CD4-positive, alpha-beta T cell (primary cell): ENCODE measurements at regions of chr16 and their contacts with region 1.

Region 1: DNA sequence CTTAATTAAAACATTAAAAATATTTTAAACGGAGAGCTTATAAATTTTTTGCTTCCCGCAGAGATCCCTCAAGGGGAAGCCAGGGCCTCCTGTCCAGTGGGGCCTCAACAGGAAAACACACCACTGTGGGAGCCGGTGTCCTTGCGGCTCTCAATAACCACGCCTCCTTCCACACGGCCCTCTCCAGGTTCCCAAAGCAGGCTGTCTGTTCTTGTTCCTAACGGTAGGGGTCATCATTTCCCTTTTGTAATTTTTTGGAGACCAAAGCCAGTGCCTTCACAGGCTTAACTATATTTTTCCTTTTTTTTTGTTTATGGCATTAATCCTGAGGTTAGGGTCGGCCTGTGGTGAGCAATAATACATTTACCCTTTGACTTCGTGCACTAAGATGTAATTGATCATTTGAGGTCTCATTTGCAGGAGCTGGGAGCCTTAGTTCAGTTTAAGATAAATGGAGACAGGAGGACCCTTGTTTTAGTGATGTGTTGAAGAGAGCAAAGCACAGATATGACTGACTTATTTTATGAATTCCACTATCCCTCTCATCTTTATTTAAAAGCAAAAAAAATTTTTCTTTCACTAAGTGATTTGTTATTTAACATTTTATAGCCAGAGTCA is 77.5 kb upstream of the N4BP1 start:
- DNase-seq: peak in 6 of 14 experiments; percentile 1 to 40 (median 12)
- ATAC-seq: no peak
- H3K4me3 ChIP-seq: no peak overlapping the region
- H3K4me3 Mint-ChIP-seq: no peak overlapping the region
- H3K27ac ChIP-seq: no peak overlapping the region
- H3K27ac Mint-ChIP-seq: no peak overlapping the region
- H3K4me1 ChIP-seq: peaks cover 3% of the 10 kb centered on the region
- H3K4me1 Mint-ChIP-seq: no peaks in the 10 kb centered on the region
- H3K27me3 ChIP-seq: peaks cover 0 to 8% of the 10 kb centered on the region in 2 experiments
- H3K27me3 Mint-ChIP-seq: peaks cover 25% of the 10 kb centered on the region
- CTCF ChIP-seq: peak; percentile 30

Region 2: DNA sequence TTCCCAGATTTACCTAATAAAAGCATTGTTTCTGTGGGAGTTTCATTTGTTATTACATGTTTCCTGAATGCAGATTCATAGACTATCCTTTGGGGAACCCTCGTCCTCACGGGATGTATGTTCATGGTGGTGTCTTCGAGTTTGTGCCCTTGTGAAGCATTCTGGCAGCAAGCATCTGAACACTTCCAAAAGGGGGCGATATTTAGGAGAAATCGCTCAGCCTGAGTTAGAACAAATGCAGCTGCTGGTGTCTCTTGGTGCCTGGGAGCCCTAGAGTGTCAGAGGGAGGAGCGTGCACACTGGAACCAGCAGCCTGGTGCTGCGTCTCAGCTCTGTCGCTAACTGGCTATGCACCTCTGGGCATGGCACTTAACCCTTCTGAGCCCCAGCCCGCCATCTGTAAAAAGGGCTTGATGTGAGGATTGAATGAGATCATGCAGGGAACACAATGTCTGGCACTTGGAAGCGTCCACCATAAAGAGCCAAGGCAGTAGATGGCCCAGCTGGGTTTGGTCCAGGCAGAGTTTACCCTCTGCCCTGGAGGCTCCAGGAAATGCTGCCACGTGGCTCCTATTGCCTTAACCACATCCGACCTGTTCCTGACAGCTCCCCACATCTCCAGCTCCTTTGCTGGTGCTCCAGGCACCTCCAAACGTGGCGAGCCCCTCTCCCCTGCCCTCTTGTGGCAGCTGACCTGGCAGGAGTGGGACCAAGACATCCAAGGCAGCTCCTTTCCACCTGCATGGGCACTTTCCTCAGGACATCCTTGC is 661.1 kb after region 1 on chr16:
- CTCF ChIA-PET with region 1: no interaction called
- POLR2A ChIA-PET with region 1: no interaction called
- intact Hi-C with region 1: loop called in 1 of 2 experiments (anchors 5 kb)
- DNase-seq: no peak
- ATAC-seq: no peak
- H3K4me3 ChIP-seq: no peak overlapping the region
- H3K4me3 Mint-ChIP-seq: no peak overlapping the region
- H3K27ac ChIP-seq: no peak overlapping the region
- H3K27ac Mint-ChIP-seq: no peak overlapping the region
- H3K4me1 ChIP-seq: no peaks in the 10 kb centered on the region
- H3K4me1 Mint-ChIP-seq: no peaks in the 10 kb centered on the region
- H3K27me3 ChIP-seq: peaks cover 3 to 4% of the 10 kb centered on the region in 2 experiments
- H3K27me3 Mint-ChIP-seq: peaks cover 43% of the 10 kb centered on the region
- CTCF ChIP-seq: no peak

Region 3: DNA sequence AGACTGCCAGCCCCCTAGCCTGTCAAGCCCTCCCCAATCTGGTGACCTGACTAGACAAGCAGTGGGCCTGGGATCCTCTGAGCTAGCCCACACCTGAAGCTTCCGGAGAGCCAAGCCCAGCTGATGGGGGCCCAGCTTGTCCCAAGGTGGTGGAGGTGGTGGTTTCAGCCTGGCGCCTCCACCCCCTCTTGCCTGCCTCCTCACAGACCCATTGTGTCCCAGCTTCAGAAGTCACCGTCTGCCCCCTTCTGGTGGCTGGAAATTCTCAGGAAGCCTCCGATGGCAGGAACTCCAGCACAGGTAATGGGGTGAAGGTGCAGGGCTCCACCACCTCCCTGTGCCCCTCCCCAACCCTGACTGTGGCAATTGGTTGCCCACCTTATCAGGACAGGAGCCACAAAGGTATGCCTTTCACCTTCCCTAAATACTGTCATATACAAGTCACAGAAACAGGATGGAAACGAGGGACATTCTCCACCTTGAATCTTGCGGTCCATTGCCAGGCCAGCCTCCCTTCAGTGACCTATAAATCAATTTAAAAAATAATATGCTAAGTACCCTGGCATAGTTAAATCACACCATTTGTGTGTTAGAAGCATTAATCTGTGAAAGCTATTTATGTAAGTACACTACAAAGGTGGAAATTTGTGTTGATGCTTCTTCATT is 1234.4 kb after region 1 on chr16:
- CTCF ChIA-PET with region 1: no interaction called
- POLR2A ChIA-PET with region 1: no interaction called
- intact Hi-C with region 1: loop called in 1 of 2 experiments (anchors 10 kb)
- DNase-seq: peak; percentile 14 to 57 (median 29)
- ATAC-seq: no peak
- H3K4me3 ChIP-seq: no peak overlapping the region
- H3K4me3 Mint-ChIP-seq: no peak overlapping the region
- H3K27ac ChIP-seq: no peak overlapping the region
- H3K27ac Mint-ChIP-seq: no peak overlapping the region
- H3K4me1 ChIP-seq: no peaks in the 10 kb centered on the region
- H3K4me1 Mint-ChIP-seq: no peaks in the 10 kb centered on the region
- H3K27me3 ChIP-seq: peaks cover 0 to 2% of the 10 kb centered on the region in 2 experiments
- H3K27me3 Mint-ChIP-seq: peaks cover 20% of the 10 kb centered on the region
- CTCF ChIP-seq: peak; percentile 23